ENCODE measurements at regions of chr2 and their contacts with region 1.

Region 1: GRCh38 chr2:128178650-128179460 is 87.9 kb downstream of the UGGT1 start:
- DNase-seq: peak; percentile 35
- H3K4me3 ChIP-seq: no peak overlapping the region
- H3K27ac ChIP-seq: no peak overlapping the region
- H3K4me1 ChIP-seq: no peaks in the 10 kb centered on the region
- H3K27me3 ChIP-seq: no peaks in the 10 kb centered on the region
- CTCF ChIP-seq: peak; percentile 86 to 91

Region 2: GRCh38 chr2:128232965-128233789 is 54.3 kb after region 1 on chr2:
- CTCF ChIA-PET with region 1: no interaction called
- dilution Hi-C with region 1: no loop called
- in situ Hi-C with region 1: no loop called
- intact Hi-C with region 1: loop called (anchors 2 kb)
- DNase-seq: peak; percentile 51
- H3K4me3 ChIP-seq: peak overlapping the region; percentile 60 to 86 (median 76)
- H3K27ac ChIP-seq: no peak overlapping the region
- H3K4me1 ChIP-seq: peaks cover 14% of the 10 kb centered on the region
- H3K27me3 ChIP-seq: no peaks in the 10 kb centered on the region
- CTCF ChIP-seq: peak; percentile 69 to 94

Region 3: GRCh38 chr2:128313091-128313836 is 134.4 kb after region 1 on chr2:
- CTCF ChIA-PET with region 1: no interaction called
- dilution Hi-C with region 1: no loop called
- in situ Hi-C with region 1: loop called in 1 of 2 experiments (anchors 25 kb)
- intact Hi-C with region 1: loop called (anchors 2 kb)
- DNase-seq: peak; percentile 45
- H3K4me3 ChIP-seq: no peak overlapping the region
- H3K27ac ChIP-seq: no peak overlapping the region
- H3K4me1 ChIP-seq: peaks cover 24% of the 10 kb centered on the region
- H3K27me3 ChIP-seq: no peaks in the 10 kb centered on the region
- CTCF ChIP-seq: peak; percentile 57 to 71

Region 4: DNA sequence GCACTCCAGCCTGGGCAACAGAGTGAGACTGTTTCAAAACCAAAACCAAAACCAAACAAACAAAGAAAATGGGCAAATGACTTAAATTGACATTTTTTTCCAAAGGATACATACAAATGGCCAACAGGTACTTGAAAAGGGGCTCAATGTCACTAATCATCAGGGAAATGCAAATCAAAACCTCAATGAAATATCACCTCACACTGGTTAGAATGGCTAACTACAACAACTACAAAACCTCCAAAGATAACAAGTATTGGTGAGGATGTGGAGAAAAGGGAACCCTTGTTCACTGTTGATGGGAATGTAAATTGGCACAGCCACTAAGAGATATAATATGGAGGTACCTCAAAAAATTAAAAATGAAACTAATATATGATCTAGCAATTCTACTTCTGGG is 353.0 kb after region 1 on chr2:
- CTCF ChIA-PET with region 1: no interaction called
- dilution Hi-C with region 1: no loop called
- in situ Hi-C with region 1: no loop called
- intact Hi-C with region 1: loop called (anchors 5 kb)
- DNase-seq: no peak
- H3K4me3 ChIP-seq: no peak overlapping the region
- H3K27ac ChIP-seq: no peak overlapping the region
- H3K4me1 ChIP-seq: no peaks in the 10 kb centered on the region
- H3K27me3 ChIP-seq: no peaks in the 10 kb centered on the region
- CTCF ChIP-seq: peak; percentile 27 to 41

Region 5: GRCh38 chr2:129296811-129297221 is 1118.0 kb after region 1 on chr2:
- CTCF ChIA-PET with region 1: no interaction called
- dilution Hi-C with region 1: no loop called
- in situ Hi-C with region 1: no loop called
- intact Hi-C with region 1: loop called (anchors 2 kb)
- DNase-seq: no peak
- H3K4me3 ChIP-seq: no peak overlapping the region
- H3K27ac ChIP-seq: no peak overlapping the region
- H3K4me1 ChIP-seq: no peaks in the 10 kb centered on the region
- H3K27me3 ChIP-seq: no peaks in the 10 kb centered on the region
- CTCF ChIP-seq: no peak

Region 6: DNA sequence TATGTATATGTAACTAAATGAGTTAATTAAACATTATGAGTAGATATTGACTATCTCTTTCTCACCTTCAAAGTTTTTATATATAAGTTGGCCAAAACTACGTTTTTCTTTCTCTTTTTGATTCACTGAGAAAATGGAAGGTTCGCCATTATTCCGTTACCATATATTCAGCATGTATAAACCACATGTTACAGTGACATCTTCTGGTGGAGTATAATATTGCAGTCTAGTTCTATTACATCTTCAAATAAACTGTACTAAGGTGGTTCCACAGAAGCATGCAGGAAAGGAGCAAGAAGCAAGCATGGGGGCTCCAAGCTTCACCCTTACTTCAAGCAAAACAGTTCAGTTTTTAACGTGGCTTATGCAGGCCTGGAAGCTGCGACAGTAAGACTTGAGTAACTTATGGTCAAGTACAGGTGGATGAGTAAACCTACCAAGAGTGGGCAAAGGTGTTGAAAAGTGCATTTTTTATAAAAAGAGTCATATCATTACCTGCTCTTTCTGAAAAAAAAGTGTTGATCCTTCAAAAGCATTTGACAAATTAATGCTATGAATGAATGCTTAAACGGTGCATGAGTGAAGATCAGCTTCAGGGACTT is 1670.8 kb after region 1 on chr2:
- CTCF ChIA-PET with region 1: no interaction called
- dilution Hi-C with region 1: no loop called
- in situ Hi-C with region 1: no loop called
- intact Hi-C with region 1: loop called (anchors 5 kb)
- DNase-seq: peak; percentile 50
- H3K4me3 ChIP-seq: no peak overlapping the region
- H3K27ac ChIP-seq: no peak overlapping the region
- H3K4me1 ChIP-seq: no peaks in the 10 kb centered on the region
- H3K27me3 ChIP-seq: no peaks in the 10 kb centered on the region
- CTCF ChIP-seq: peak; percentile 63 to 75